MCF 10A (cell line): ENCODE measurements at regions of chr3 and their contacts with region 1.

Region 1: GRCh38 chr3:185937689-185938463 is at the start of gene TRA2B:
- DNase-seq: peak; percentile 99
- H3K4me3 Mint-ChIP-seq: peak within 1 kb of the TSS; percentile 98
- H3K27ac Mint-ChIP-seq: peak within 1 kb of the TSS; percentile 100
- H3K4me1 Mint-ChIP-seq: peaks cover 17% of the 10 kb centered on the region
- H3K27me3 Mint-ChIP-seq: no peaks in the 10 kb centered on the region
- CTCF ChIP-seq: no peak
- total RNA-seq, gene TRA2B: 212 and 246 TPM in 2 replicates

Region 2: DNA sequence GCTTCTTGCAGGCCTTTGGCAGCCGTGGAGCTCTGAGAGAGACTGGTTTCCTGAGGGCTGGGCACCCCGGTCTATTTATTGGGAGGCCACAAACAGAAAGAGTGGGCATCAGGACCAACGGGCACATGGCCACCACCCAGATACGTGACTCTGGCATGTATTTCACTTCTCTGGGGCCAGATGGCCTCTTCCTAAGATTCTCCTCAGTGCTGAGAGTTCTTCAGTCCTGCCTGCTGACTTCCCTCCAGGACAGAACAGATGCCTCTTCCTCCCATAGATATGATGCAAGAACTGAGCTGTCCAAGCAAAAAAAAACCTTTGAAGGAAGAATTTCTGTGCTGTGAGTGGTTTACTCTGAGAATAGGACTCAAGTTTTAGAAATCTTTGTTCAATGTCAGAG is 220.8 kb before region 1 on chr3:
- CTCF ChIA-PET with region 1: interaction called, 3 read pairs
- POLR2A ChIA-PET with region 1: interaction called, 13 read pairs
- intact Hi-C with region 1: no loop called
- DNase-seq: peak; percentile 74
- H3K4me3 Mint-ChIP-seq: peak overlapping the region; percentile 40
- H3K27ac Mint-ChIP-seq: peak overlapping the region; percentile 96
- H3K4me1 Mint-ChIP-seq: peaks cover 55% of the 10 kb centered on the region
- H3K27me3 Mint-ChIP-seq: no peaks in the 10 kb centered on the region
- CTCF ChIP-seq: no peak

Region 3: GRCh38 chr3:185900226-185900625 is 37.6 kb before region 1 on chr3:
- CTCF ChIA-PET with region 1: interaction called, 3 read pairs
- POLR2A ChIA-PET with region 1: interaction called, 15 read pairs
- intact Hi-C with region 1: no loop called
- DNase-seq: peak; percentile 98
- H3K4me3 Mint-ChIP-seq: no peak overlapping the region
- H3K27ac Mint-ChIP-seq: peak overlapping the region; percentile 59
- H3K4me1 Mint-ChIP-seq: peaks cover 10% of the 10 kb centered on the region
- H3K27me3 Mint-ChIP-seq: no peaks in the 10 kb centered on the region
- CTCF ChIP-seq: no peak

Region 4: GRCh38 chr3:185912929-185913901 is 24.7 kb before region 1 on chr3:
- CTCF ChIA-PET with region 1: interaction called, 4 read pairs
- POLR2A ChIA-PET with region 1: interaction called, 91 read pairs
- intact Hi-C with region 1: no loop called
- DNase-seq: no peak
- H3K4me3 Mint-ChIP-seq: no peak overlapping the region
- H3K27ac Mint-ChIP-seq: no peak overlapping the region
- H3K4me1 Mint-ChIP-seq: no peaks in the 10 kb centered on the region
- H3K27me3 Mint-ChIP-seq: no peaks in the 10 kb centered on the region
- CTCF ChIP-seq: no peak

Region 5: GRCh38 chr3:185959609-185960517 is 22.0 kb after region 1 on chr3:
- CTCF ChIA-PET with region 1: interaction called, 118 read pairs
- POLR2A ChIA-PET with region 1: interaction called, 15 read pairs
- intact Hi-C with region 1: no loop called
- DNase-seq: peak; percentile 88
- H3K4me3 Mint-ChIP-seq: no peak overlapping the region
- H3K27ac Mint-ChIP-seq: no peak overlapping the region
- H3K4me1 Mint-ChIP-seq: peaks cover 7% of the 10 kb centered on the region
- H3K27me3 Mint-ChIP-seq: no peaks in the 10 kb centered on the region
- CTCF ChIP-seq: no peak

Region 6: GRCh38 chr3:186079925-186080324 is 142.0 kb after region 1 on chr3:
- CTCF ChIA-PET with region 1: no interaction called
- POLR2A ChIA-PET with region 1: no interaction called
- intact Hi-C with region 1: no loop called
- DNase-seq: no peak
- H3K4me3 Mint-ChIP-seq: no peak overlapping the region
- H3K27ac Mint-ChIP-seq: no peak overlapping the region
- H3K4me1 Mint-ChIP-seq: peaks cover 8% of the 10 kb centered on the region
- H3K27me3 Mint-ChIP-seq: no peaks in the 10 kb centered on the region
- CTCF ChIP-seq: no peak